Tibial artery (tissue), 4 donors: ENCODE measurements at regions of chr1 and their contacts with region 1.

Region 1: DNA sequence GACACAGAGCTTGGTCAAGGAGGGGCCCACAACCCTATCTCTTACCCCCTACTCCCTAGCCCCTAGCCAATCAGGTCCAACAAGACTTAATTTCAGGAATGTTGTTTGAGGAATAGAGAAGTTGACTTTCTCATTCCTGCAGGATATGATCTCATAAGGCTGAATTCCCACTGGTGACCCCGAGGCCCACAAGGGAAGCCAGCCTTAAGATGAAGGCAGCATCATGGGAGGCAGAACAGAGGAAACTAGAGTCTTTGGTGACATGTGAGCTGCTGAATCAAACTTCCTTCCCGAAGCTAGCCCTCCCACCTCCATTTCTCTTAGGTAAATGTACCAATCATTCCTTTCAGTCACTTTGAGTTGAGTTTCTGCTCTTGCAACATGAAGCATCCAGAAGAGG is 9.1 kb upstream of the PDIK1L start:
- DNase-seq: peak in 1 of 2 donors; percentile 4
- H3K4me3 ChIP-seq: no peak overlapping the region
- H3K27ac ChIP-seq: no peak overlapping the region
- H3K4me1 ChIP-seq: no peaks in the 10 kb centered on the region
- H3K27me3 ChIP-seq: peaks cover 0 to 16% of the 10 kb centered on the region in 2 donors
- CTCF ChIP-seq: no peak

Region 2: GRCh38 chr1:26321315-26322041 is 219.0 kb after region 1 on chr1:
- intact Hi-C with region 1: loop called (anchors 10 kb)
- DNase-seq: peak; percentile 94 to 95
- H3K4me3 ChIP-seq: no peak overlapping the region
- H3K27ac ChIP-seq: no peak overlapping the region
- H3K4me1 ChIP-seq: peaks cover 0 to 6% (median 5%) of the 10 kb centered on the region in 4 donors
- H3K27me3 ChIP-seq: peaks cover 0 to 29% of the 10 kb centered on the region in 2 donors
- CTCF ChIP-seq: peak; percentile 88 to 95